Activated CD4-positive, alpha-beta memory T cell treated with anti-CD3 and anti-CD28 coated beads, Interleukin-2, amount 10 ng/mL, durations not matched to agents 7 days and 5 days (primary cell): ENCODE measurements at regions of chr3 and their contacts with region 1.

Region 1: DNA sequence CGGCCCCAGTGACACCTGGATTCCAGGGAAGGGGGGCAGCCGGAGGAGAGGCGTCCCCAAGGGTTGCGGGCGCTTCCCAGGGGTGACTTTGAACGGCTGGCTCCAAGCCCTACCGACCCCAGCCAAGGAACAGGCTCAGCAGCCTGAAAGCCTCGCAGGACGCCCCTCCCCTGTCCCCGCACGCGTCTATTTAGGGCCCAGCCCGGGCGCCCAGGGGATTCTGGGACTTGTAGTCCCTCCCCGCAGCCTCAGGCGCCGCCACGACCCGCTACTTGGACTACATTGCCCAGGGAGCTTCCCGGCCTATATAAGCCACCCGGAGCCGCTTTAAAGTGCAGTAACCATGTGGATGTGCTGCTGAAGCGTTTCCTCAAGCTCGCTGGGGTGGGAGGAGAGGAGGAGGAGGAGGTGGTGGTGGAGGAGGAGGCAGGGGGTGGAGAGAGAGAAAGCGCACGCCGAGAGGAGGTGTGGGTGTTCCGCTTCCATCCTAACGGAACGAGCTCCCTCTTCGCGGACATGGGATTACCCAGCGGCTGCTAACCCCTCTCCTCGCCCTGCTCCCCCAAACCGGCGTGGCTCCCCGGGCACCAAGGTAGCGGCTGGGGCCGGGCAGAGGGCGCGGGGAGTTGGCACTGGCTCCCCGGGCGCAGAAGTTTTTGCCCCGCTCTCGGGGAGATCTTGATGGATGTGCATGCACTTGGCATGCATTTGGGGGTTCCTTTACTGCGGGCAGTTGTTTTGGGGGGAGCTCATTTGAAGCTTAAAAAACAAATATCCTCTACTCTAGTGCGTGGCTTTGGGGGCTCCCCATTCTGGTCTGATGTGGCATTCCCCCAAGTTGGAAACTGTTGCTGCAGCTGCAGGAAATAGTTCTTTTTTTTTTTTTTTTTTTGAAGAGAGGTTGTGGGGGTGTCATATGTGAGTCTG is at the start of gene ITPR1:
- DNase-seq: peak; percentile 99
- H3K4me3 Mint-ChIP-seq: peak within 1 kb of the TSS; percentile 82
- H3K27ac Mint-ChIP-seq: peak within 1 kb of the TSS; percentile 65
- H3K4me1 Mint-ChIP-seq: peaks cover 34% of the 10 kb centered on the region
- H3K27me3 Mint-ChIP-seq: peaks cover 19% of the 10 kb centered on the region
- total RNA-seq, gene ITPR1: 59.6 to 64.3 TPM

Region 2: GRCh38 chr3:4350789-4351163 is 142.5 kb before region 1 on chr3:
- CTCF ChIA-PET with region 1: interaction called, 51 read pairs
- POLR2A ChIA-PET with region 1: interaction called, 38 read pairs
- DNase-seq: peak; percentile 54
- H3K4me3 Mint-ChIP-seq: peak overlapping the region; percentile 55
- H3K27ac Mint-ChIP-seq: peak overlapping the region; percentile 16
- H3K4me1 Mint-ChIP-seq: peaks cover 20% of the 10 kb centered on the region
- H3K27me3 Mint-ChIP-seq: no peaks in the 10 kb centered on the region

Region 3: GRCh38 chr3:4466741-4467521 is 26.3 kb before region 1 on chr3 and contains the start of gene SUMF1:
- CTCF ChIA-PET with region 1: interaction called, 6 read pairs
- POLR2A ChIA-PET with region 1: interaction called, 60 read pairs
- DNase-seq: peak; percentile 82
- H3K4me3 Mint-ChIP-seq: peak within 1 kb of the TSS; percentile 88
- H3K27ac Mint-ChIP-seq: peak within 1 kb of the TSS; percentile 86
- H3K4me1 Mint-ChIP-seq: peaks cover 22% of the 10 kb centered on the region
- H3K27me3 Mint-ChIP-seq: peaks cover under 1% of the 10 kb centered on the region
- total RNA-seq, gene SUMF1: 7.1 to 7.3 TPM

Region 4: GRCh38 chr3:4504340-4505261 is 11.3 kb after region 1 on chr3:
- CTCF ChIA-PET with region 1: interaction called, 16 read pairs
- POLR2A ChIA-PET with region 1: interaction called, 93 read pairs
- DNase-seq: peak; percentile 31
- H3K4me3 Mint-ChIP-seq: peak overlapping the region; percentile 78
- H3K27ac Mint-ChIP-seq: peak overlapping the region; percentile 90
- H3K4me1 Mint-ChIP-seq: peaks cover 50% of the 10 kb centered on the region
- H3K27me3 Mint-ChIP-seq: no peaks in the 10 kb centered on the region

Region 5: GRCh38 chr3:5197470-5198312 is 704.4 kb after region 1 on chr3:
- CTCF ChIA-PET with region 1: no interaction called
- POLR2A ChIA-PET with region 1: no interaction called
- DNase-seq: peak; percentile 60
- H3K4me3 Mint-ChIP-seq: peak overlapping the region; percentile 67
- H3K27ac Mint-ChIP-seq: peak overlapping the region; percentile 96
- H3K4me1 Mint-ChIP-seq: peaks cover 79% of the 10 kb centered on the region
- H3K27me3 Mint-ChIP-seq: no peaks in the 10 kb centered on the region